ENCODE measurements at regions of chr1 and their contacts with region 1.

Region 1: GRCh38 chr1:175911138-175911537 is 167.7 kb upstream of the TNR start:
- DNase-seq: no peak
- CTCF ChIP-seq: no peak

Region 2: GRCh38 chr1:175922254-175922881 is 11.2 kb after region 1 on chr1:
- CTCF ChIA-PET with region 1: interaction called, 10 read pairs
- POLR2A ChIA-PET with region 1: no interaction called
- DNase-seq: no peak
- CTCF ChIP-seq: no peak

Region 3: GRCh38 chr1:175941164-175941563 is 30.0 kb after region 1 on chr1:
- CTCF ChIA-PET with region 1: no interaction called
- POLR2A ChIA-PET with region 1: no interaction called
- DNase-seq: no peak
- CTCF ChIP-seq: no peak